ENCODE measurements at regions of chr4 and their contacts with region 1.

Region 1: DNA sequence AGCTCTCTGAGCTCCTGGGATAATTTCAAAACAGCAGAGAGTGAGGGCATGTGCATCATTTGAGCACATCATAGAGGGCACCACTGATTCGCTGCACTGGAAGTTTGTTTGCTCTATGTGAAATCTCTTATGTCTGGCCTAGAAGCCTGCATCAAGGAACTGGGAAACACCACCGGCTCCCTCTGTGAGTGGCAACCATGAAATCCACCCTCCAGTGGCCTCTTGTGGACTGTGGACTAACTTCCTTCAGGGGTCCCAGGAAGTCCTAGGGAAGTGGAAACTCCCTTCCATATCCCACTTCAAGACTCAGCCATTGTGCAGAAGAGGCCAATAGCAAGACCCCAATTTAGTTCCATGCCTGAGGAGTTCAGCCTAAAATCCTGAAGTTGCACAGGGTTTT is 48.0 kb upstream of the IGFBP7 start:
- DNase-seq: no peak
- ATAC-seq: peak; percentile 57; the same call in 2 of the 3 replicates
- H3K4me3 ChIP-seq: no peak overlapping the region
- H3K27ac ChIP-seq: no peak overlapping the region
- H3K4me1 ChIP-seq: peaks cover 1% of the 10 kb centered on the region; the same call in 1 of the 2 replicates
- H3K27me3 ChIP-seq: peaks cover 0 to 4% of the 10 kb centered on the region in 2 experiments; a peak in 2 of 5 replicates
- CTCF ChIP-seq: no peak
- EP300 ChIP-seq: no peak
- POLR2A ChIP-seq: no peak
- RAD21 ChIP-seq: no peak

Region 2: GRCh38 chr4:57043347-57044251 is 114.6 kb before region 1 on chr4:
- CTCF ChIA-PET with region 1: interaction called, 11 read pairs
- POLR2A ChIA-PET with region 1: no interaction called
- in situ Hi-C with region 1: loop called (anchors 5 kb)
- intact Hi-C with region 1: loop called (anchors 1 kb)
- DNase-seq: no peak
- ATAC-seq: peak; percentile 32; the same call in 2 of the 3 replicates
- H3K4me3 ChIP-seq: no peak overlapping the region
- H3K27ac ChIP-seq: no peak overlapping the region
- H3K4me1 ChIP-seq: no peaks in the 10 kb centered on the region
- H3K27me3 ChIP-seq: no peaks in the 10 kb centered on the region; a peak in 1 of 5 replicates
- CTCF ChIP-seq: no peak
- EP300 ChIP-seq: no peak
- POLR2A ChIP-seq: no peak
- RAD21 ChIP-seq: no peak

Region 3: GRCh38 chr4:57064811-57065711 is 93.2 kb before region 1 on chr4:
- CTCF ChIA-PET with region 1: no interaction called
- POLR2A ChIA-PET with region 1: no interaction called
- in situ Hi-C with region 1: loop called (anchors 5 kb)
- intact Hi-C with region 1: no loop called
- DNase-seq: no peak
- ATAC-seq: no peak
- H3K4me3 ChIP-seq: no peak overlapping the region
- H3K27ac ChIP-seq: no peak overlapping the region
- H3K4me1 ChIP-seq: no peaks in the 10 kb centered on the region
- H3K27me3 ChIP-seq: no peaks in the 10 kb centered on the region; a peak in 1 of 5 replicates
- CTCF ChIP-seq: no peak
- EP300 ChIP-seq: no peak
- POLR2A ChIP-seq: no peak
- RAD21 ChIP-seq: no peak

Measured in HepG2 (cell line).